Activated B cell treated with CpG ODN at 0.5 μM for 24 hours (primary cell): ENCODE measurements at regions of chr1 and their contacts with region 1.

Region 1: GRCh38 chr1:19882111-19883071 is at the start of gene OTUD3:
- DNase-seq: peak; percentile 90
- ATAC-seq: peak; percentile 96
- H3K4me3 Mint-ChIP-seq: peak within 1 kb of the TSS; percentile 87
- H3K27ac Mint-ChIP-seq: peak within 1 kb of the TSS; percentile 84
- H3K4me1 Mint-ChIP-seq: peaks cover 30% of the 10 kb centered on the region
- H3K27me3 Mint-ChIP-seq: peaks cover 5% of the 10 kb centered on the region
- CTCF ChIP-seq: peak; percentile 64
- total RNA-seq, gene OTUD3: 13.2 and 14.2 TPM in 2 replicates

Region 2: DNA sequence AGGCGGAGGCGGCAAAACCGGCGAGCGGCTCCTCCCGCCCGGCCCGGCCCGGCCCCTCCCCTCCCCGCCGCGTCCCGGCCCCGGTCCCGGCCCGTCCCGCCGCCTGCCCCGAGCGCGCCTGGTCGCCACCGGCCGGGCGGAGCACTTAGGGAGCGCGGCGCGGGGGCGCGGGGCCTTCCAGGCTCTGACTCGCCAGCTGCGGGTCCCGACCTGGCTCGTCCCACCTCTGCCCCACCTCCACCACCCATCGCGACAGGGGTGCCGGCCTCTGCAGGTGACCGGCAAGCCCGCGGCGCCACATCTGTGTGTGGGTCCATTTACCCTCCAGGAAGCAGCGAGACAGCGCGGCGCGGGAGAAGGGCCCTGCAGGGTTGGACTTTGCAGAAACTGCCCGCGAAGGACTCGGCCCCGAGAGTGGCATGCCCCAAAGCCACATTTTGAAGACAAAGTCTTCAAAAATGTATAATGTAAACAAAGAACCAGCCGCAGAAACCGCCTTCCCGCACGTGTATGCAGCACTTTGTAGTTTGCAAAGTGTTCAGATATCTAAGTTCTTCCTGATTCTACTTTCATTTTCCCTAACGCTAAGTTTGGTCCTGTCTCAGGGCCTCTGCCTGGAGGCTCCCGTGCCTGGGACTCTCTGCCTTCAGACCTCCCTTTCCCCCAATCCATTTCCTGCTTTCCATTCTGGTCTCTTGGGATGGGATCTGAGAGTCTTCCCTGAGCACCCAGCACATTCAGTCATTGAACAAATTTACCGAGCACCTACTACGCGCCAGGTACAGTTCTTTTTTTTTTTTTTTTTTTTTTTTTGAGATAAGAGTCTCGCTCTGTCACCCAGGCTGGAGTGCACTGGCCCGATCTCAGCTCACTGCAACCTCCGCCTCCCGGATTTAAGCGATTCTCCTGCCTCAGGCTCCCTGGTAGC is 82.2 kb before region 1 on chr1 and contains the start of gene TMCO4:
- CTCF ChIA-PET with region 1: no interaction called
- POLR2A ChIA-PET with region 1: no interaction called
- intact Hi-C with region 1: loop called (anchors 2 kb)
- DNase-seq: peak; percentile 56
- ATAC-seq: peak; percentile 56
- H3K4me3 Mint-ChIP-seq: peak within 1 kb of the TSS; percentile 91
- H3K27ac Mint-ChIP-seq: peak within 1 kb of the TSS; percentile 87
- H3K4me1 Mint-ChIP-seq: peaks cover 14% of the 10 kb centered on the region
- H3K27me3 Mint-ChIP-seq: peaks cover 2% of the 10 kb centered on the region
- CTCF ChIP-seq: no peak
- total RNA-seq, gene TMCO4: 22.3 and 23.4 TPM in 2 replicates